ENCODE measurements at regions of chr12 and their contacts with region 1.

Region 1: GRCh38 chr12:121888478-121889266 is at the start of gene PSMD9:
- DNase-seq: peak; percentile 96 to 99 (median 99)
- ATAC-seq: peak; percentile 93
- H3K4me3 ChIP-seq: peak within 1 kb of the TSS; percentile 72 to 80
- H3K4me3 Mint-ChIP-seq: peak within 1 kb of the TSS; percentile 99
- H3K27ac ChIP-seq: peak within 1 kb of the TSS; percentile 88 to 92
- H3K27ac Mint-ChIP-seq: peak within 1 kb of the TSS; percentile 99
- H3K4me1 ChIP-seq: peaks cover 32% of the 10 kb centered on the region
- H3K4me1 Mint-ChIP-seq: peaks cover 35% of the 10 kb centered on the region
- H3K27me3 ChIP-seq: no peaks in the 10 kb centered on the region
- H3K27me3 Mint-ChIP-seq: no peaks in the 10 kb centered on the region
- CTCF ChIP-seq: peak; percentile 27
- total RNA-seq, gene PSMD9: 38.7 to 42.2 TPM

Region 2: GRCh38 chr12:121467115-121467793 is 421.4 kb before region 1 on chr12:
- CTCF ChIA-PET with region 1: no interaction called
- POLR2A ChIA-PET with region 1: no interaction called
- intact Hi-C with region 1: loop called in 1 of 2 experiments (anchors 5 kb)
- DNase-seq: peak; percentile 77 to 94 (median 86)
- ATAC-seq: peak; percentile 85
- H3K4me3 ChIP-seq: peak overlapping the region; percentile 49 to 55
- H3K4me3 Mint-ChIP-seq: peak overlapping the region; percentile 68
- H3K27ac ChIP-seq: peak overlapping the region; percentile 44 to 59
- H3K27ac Mint-ChIP-seq: no peak overlapping the region
- H3K4me1 ChIP-seq: peaks cover 26% of the 10 kb centered on the region
- H3K4me1 Mint-ChIP-seq: peaks cover 37% of the 10 kb centered on the region
- H3K27me3 ChIP-seq: no peaks in the 10 kb centered on the region
- H3K27me3 Mint-ChIP-seq: no peaks in the 10 kb centered on the region
- CTCF ChIP-seq: no peak

Region 3: GRCh38 chr12:121697098-121697698 is 191.5 kb before region 1 on chr12:
- CTCF ChIA-PET with region 1: no interaction called
- POLR2A ChIA-PET with region 1: no interaction called
- intact Hi-C with region 1: loop called in 1 of 2 experiments (anchors 1 kb)
- DNase-seq: peak in 4 of 9 experiments; percentile 18 to 76 (median 59)
- ATAC-seq: peak; percentile 51
- H3K4me3 ChIP-seq: no peak overlapping the region
- H3K4me3 Mint-ChIP-seq: no peak overlapping the region
- H3K27ac ChIP-seq: no peak overlapping the region
- H3K27ac Mint-ChIP-seq: no peak overlapping the region
- H3K4me1 ChIP-seq: no peaks in the 10 kb centered on the region
- H3K4me1 Mint-ChIP-seq: peaks cover 2% of the 10 kb centered on the region
- H3K27me3 ChIP-seq: no peaks in the 10 kb centered on the region
- H3K27me3 Mint-ChIP-seq: no peaks in the 10 kb centered on the region
- CTCF ChIP-seq: peak; percentile 68

Region 4: GRCh38 chr12:121773011-121773777 is 115.5 kb before region 1 on chr12:
- CTCF ChIA-PET with region 1: no interaction called
- POLR2A ChIA-PET with region 1: no interaction called
- intact Hi-C with region 1: loop called in 1 of 2 experiments (anchors 1 kb)
- DNase-seq: peak; percentile 63 to 88 (median 80)
- ATAC-seq: peak; percentile 90
- H3K4me3 ChIP-seq: no peak overlapping the region
- H3K4me3 Mint-ChIP-seq: no peak overlapping the region
- H3K27ac ChIP-seq: peak overlapping the region in 1 of 2 experiments; percentile 32
- H3K27ac Mint-ChIP-seq: peak overlapping the region; percentile 57
- H3K4me1 ChIP-seq: peaks cover 29% of the 10 kb centered on the region
- H3K4me1 Mint-ChIP-seq: peaks cover 16% of the 10 kb centered on the region
- H3K27me3 ChIP-seq: no peaks in the 10 kb centered on the region
- H3K27me3 Mint-ChIP-seq: no peaks in the 10 kb centered on the region
- CTCF ChIP-seq: peak; percentile 82

Region 5: GRCh38 chr12:121811434-121812319 is 77.0 kb before region 1 on chr12:
- CTCF ChIA-PET with region 1: interaction called, 17 read pairs
- POLR2A ChIA-PET with region 1: interaction called, 3 read pairs
- intact Hi-C with region 1: loop called in 1 of 2 experiments (anchors 5 kb)
- DNase-seq: peak; percentile 51 to 86 (median 68)
- ATAC-seq: peak; percentile 70
- H3K4me3 ChIP-seq: peak overlapping the region; percentile 52 to 74
- H3K4me3 Mint-ChIP-seq: peak overlapping the region; percentile 83
- H3K27ac ChIP-seq: peak overlapping the region in 1 of 2 experiments; percentile 40
- H3K27ac Mint-ChIP-seq: peak overlapping the region; percentile 89
- H3K4me1 ChIP-seq: peaks cover 50% of the 10 kb centered on the region
- H3K4me1 Mint-ChIP-seq: peaks cover 57% of the 10 kb centered on the region
- H3K27me3 ChIP-seq: no peaks in the 10 kb centered on the region
- H3K27me3 Mint-ChIP-seq: no peaks in the 10 kb centered on the region
- CTCF ChIP-seq: peak; percentile 96

Region 6: DNA sequence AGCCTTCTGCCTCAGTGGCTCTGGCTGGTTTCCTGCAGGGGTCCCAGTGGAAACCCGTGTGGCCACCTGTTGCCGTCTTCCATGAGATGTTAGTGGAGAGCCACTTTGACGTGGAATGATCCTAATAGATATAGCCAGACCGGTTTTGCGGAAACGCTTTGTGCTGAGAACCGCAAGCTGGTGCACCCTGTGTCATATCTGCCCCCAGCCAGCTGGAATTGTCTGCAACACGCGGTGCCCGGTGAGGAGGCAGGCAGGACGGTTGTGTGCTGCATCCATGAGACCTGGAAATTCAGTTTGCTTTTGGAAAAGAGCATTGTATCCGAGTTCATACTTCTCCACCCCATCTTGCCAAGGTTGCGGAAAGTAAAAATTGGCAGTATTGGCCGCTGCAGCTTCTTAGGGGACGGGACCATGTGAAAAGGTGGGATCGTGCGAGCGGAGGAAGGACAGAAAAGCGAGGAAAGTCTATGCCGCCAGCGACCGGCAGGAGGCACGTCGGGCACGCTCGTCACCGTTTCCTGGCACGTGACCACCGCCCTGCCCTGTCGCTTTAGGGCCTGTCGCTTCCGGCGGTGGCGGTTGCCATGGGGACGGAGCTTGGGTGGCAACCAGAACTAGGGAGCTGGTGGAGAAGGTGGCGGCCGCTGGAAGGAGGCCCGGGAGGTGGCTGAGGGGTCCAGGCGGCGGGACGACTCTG is 29.5 kb after region 1 on chr12 and contains the start of gene CFAP251:
- CTCF ChIA-PET with region 1: interaction called, 3 read pairs
- POLR2A ChIA-PET with region 1: interaction called, 4 read pairs
- intact Hi-C with region 1: loop called (anchors 1 kb)
- DNase-seq: peak; percentile 86 to 98 (median 97)
- ATAC-seq: peak; percentile 97
- H3K4me3 ChIP-seq: peak within 1 kb of the TSS; percentile 43 to 54
- H3K4me3 Mint-ChIP-seq: peak within 1 kb of the TSS; percentile 84
- H3K27ac ChIP-seq: peak within 1 kb of the TSS; percentile 54 to 84
- H3K27ac Mint-ChIP-seq: peak within 1 kb of the TSS; percentile 90
- H3K4me1 ChIP-seq: peaks cover 11% of the 10 kb centered on the region
- H3K4me1 Mint-ChIP-seq: peaks cover 12% of the 10 kb centered on the region
- H3K27me3 ChIP-seq: no peaks in the 10 kb centered on the region
- H3K27me3 Mint-ChIP-seq: no peaks in the 10 kb centered on the region
- CTCF ChIP-seq: peak; percentile 61
- total RNA-seq, gene CFAP251: 0.33 to 0.68 TPM

Measured in CD8-positive, alpha-beta T cell (primary cell).